Endothelial cell of umbilical vein (primary cell): ENCODE measurements at regions of chr3 and their contacts with region 1.

Region 1: DNA sequence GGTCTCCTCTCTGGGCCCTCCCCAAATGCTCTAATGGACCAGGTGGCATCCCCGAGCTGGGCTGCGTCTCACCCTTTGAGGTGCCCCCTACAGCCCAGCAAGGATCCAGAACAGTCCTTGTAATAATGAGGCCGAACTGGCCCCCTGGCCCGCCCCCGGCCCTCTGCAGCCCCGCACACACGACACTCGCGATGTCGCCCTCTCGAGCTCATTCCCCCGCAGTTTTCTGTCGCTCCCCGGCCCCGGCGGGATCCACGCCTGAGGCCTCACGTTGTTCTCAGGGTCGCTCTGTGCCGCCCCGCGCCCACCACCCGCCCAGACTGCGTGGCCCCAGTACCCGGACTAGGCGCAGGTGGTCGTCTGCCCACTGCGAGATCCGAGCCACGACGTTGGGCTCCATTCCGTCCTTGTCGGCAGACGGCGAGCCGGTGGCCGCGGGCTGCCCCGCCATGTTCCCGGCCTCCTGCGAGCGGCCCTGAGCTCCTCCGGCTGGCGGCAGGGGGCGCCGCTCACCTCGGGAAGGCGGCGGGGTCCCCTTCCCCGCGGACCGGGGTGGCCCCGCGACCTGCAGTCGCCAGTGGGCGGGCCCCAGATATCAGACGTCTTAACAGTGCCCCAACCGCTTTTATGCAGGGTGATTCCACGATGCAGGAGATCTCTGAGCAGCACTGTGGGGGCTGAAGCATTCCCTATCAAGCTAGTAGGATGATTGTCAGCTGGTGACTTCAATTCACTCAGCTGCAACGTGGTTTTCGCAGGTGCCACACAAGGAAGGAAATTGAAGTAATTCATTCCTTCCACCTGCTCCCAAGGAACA is at the start of gene C3orf33:
- DNase-seq: peak; percentile 73
- H3K4me3 ChIP-seq: peak within 1 kb of the TSS; percentile 75 to 93 (median 84)
- H3K27ac ChIP-seq: peak within 1 kb of the TSS; percentile 55
- H3K4me1 ChIP-seq: peaks cover 6% of the 10 kb centered on the region
- H3K27me3 ChIP-seq: no peaks in the 10 kb centered on the region
- CTCF ChIP-seq: peak; percentile 88 to 89
- POLR2A ChIP-seq: peak; percentile 22
- total RNA-seq, gene C3orf33: 0.74 and 1.7 TPM in 2 replicates

Region 2: DNA sequence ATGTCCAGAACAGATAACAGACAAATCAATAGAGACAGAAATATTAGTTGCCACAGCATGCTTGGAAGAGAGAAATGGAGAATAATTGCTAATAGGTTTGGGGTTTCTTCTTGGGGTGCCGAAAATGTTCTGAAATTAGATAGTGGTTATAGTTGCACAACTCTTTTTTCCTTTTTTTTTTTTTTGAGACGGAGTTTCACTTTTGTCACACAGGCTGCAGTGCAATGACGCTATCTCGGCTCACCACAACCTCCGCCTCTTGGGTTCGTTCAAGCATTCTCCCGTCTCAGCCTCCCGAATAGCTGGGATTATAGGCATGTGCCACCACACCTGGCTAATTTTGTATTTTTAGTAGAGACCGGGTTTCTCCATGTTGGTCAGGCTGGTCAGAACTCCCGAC is 224.4 kb before region 1 on chr3:
- CTCF ChIA-PET with region 1: no interaction called
- POLR2A ChIA-PET with region 1: no interaction called
- dilution Hi-C with region 1: no loop called
- intact Hi-C with region 1: no loop called
- DNase-seq: no peak
- H3K4me3 ChIP-seq: no peak overlapping the region
- H3K27ac ChIP-seq: no peak overlapping the region
- H3K4me1 ChIP-seq: no peaks in the 10 kb centered on the region
- H3K27me3 ChIP-seq: no peaks in the 10 kb centered on the region
- CTCF ChIP-seq: no peak
- POLR2A ChIP-seq: no peak

Region 3: DNA sequence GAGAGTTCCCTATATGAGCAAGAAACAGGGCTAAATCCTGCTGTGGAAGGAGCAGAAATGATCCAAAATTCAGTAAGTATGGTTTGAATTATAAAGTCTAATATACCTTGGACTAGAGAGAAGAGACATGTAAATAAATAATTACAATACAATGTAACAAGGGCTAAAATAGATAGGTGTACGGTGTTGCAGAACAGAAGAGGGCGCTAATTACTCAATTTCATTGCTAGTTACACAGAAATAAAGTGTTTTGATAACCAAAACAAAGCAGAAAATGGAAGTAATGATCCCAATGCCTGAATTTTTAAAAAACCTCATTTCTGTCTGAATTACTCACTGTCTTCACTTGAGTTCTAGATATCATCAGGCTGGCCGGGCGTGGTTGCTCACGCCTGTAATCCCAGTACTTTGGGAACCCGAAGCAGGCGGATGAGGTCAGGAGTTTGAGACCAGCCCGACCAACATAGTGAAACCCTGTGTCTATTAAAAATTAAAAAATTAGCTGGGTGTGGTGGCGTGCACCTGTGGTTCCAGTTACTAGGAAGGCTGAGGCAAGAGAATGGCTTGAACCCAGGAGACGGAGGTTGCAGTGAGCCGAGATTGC is 52.9 kb before region 1 on chr3:
- CTCF ChIA-PET with region 1: interaction called, 17 read pairs
- POLR2A ChIA-PET with region 1: no interaction called
- dilution Hi-C with region 1: no loop called
- intact Hi-C with region 1: loop called (anchors 2 kb)
- DNase-seq: peak; percentile 50
- H3K4me3 ChIP-seq: no peak overlapping the region
- H3K27ac ChIP-seq: no peak overlapping the region
- H3K4me1 ChIP-seq: no peaks in the 10 kb centered on the region
- H3K27me3 ChIP-seq: peaks cover 0 to 2% of the 10 kb centered on the region in 2 experiments
- CTCF ChIP-seq: peak; percentile 46 to 49
- POLR2A ChIP-seq: no peak

Region 4: DNA sequence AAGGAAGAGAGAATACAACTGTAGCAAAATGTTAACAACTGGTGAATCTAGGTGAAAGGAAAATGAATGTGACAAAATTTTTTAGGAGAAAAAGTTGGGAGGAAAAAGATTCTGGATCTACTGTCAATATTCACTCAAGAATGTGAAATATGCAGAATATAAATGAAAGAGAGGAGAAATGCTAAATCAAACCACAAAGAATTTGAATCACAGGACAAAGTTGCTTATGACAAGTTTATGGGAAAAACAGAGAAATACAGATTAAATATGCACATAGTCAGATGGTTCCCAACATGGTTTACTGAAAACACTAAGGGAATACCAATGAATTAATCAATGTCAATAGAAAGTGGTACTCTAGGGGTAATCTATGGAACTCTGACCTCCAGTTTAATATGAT is 27.5 kb before region 1 on chr3:
- CTCF ChIA-PET with region 1: interaction called, 19 read pairs
- POLR2A ChIA-PET with region 1: no interaction called
- dilution Hi-C with region 1: no loop called
- intact Hi-C with region 1: no loop called
- DNase-seq: no peak
- H3K4me3 ChIP-seq: no peak overlapping the region
- H3K27ac ChIP-seq: no peak overlapping the region
- H3K4me1 ChIP-seq: no peaks in the 10 kb centered on the region
- H3K27me3 ChIP-seq: no peaks in the 10 kb centered on the region
- CTCF ChIP-seq: no peak
- POLR2A ChIP-seq: no peak

Region 5: GRCh38 chr3:155791190-155791589 is 14.8 kb before region 1 on chr3:
- CTCF ChIA-PET with region 1: interaction called, 18 read pairs
- POLR2A ChIA-PET with region 1: no interaction called
- dilution Hi-C with region 1: no loop called
- intact Hi-C with region 1: no loop called
- DNase-seq: no peak
- H3K4me3 ChIP-seq: no peak overlapping the region
- H3K27ac ChIP-seq: no peak overlapping the region
- H3K4me1 ChIP-seq: no peaks in the 10 kb centered on the region
- H3K27me3 ChIP-seq: no peaks in the 10 kb centered on the region
- CTCF ChIP-seq: no peak
- POLR2A ChIP-seq: no peak

Region 6: GRCh38 chr3:155854141-155854940 is 48.3 kb after region 1 on chr3 and contains the start of gene SLC33A1:
- CTCF ChIA-PET with region 1: interaction called, 34 read pairs
- POLR2A ChIA-PET with region 1: interaction called, 4 read pairs
- dilution Hi-C with region 1: no loop called
- intact Hi-C with region 1: loop called (anchors 1 kb)
- DNase-seq: peak; percentile 100
- H3K4me3 ChIP-seq: peak within 1 kb of the TSS; percentile 56 to 96 (median 75)
- H3K27ac ChIP-seq: peak within 1 kb of the TSS; percentile 56
- H3K4me1 ChIP-seq: peaks cover 7% of the 10 kb centered on the region
- H3K27me3 ChIP-seq: no peaks in the 10 kb centered on the region
- CTCF ChIP-seq: no peak
- POLR2A ChIP-seq: peak; percentile 79
- total RNA-seq, gene SLC33A1: 30.1 and 30.3 TPM in 2 replicates

Region 7: GRCh38 chr3:155870133-155870944 is 64.3 kb after region 1 on chr3 and contains the start of gene GMPS:
- CTCF ChIA-PET with region 1: interaction called, 40 read pairs
- POLR2A ChIA-PET with region 1: interaction called, 4 read pairs
- dilution Hi-C with region 1: no loop called
- intact Hi-C with region 1: loop called (anchors 1 kb)
- DNase-seq: peak; percentile 96
- H3K4me3 ChIP-seq: peak within 1 kb of the TSS; percentile 93 to 98 (median 96)
- H3K27ac ChIP-seq: peak within 1 kb of the TSS; percentile 79
- H3K4me1 ChIP-seq: peaks cover 20% of the 10 kb centered on the region
- H3K27me3 ChIP-seq: no peaks in the 10 kb centered on the region
- CTCF ChIP-seq: peak; percentile 8 to 33
- POLR2A ChIP-seq: peak; percentile 59
- total RNA-seq, gene GMPS: 66.0 and 67.5 TPM in 2 replicates

Region 8: DNA sequence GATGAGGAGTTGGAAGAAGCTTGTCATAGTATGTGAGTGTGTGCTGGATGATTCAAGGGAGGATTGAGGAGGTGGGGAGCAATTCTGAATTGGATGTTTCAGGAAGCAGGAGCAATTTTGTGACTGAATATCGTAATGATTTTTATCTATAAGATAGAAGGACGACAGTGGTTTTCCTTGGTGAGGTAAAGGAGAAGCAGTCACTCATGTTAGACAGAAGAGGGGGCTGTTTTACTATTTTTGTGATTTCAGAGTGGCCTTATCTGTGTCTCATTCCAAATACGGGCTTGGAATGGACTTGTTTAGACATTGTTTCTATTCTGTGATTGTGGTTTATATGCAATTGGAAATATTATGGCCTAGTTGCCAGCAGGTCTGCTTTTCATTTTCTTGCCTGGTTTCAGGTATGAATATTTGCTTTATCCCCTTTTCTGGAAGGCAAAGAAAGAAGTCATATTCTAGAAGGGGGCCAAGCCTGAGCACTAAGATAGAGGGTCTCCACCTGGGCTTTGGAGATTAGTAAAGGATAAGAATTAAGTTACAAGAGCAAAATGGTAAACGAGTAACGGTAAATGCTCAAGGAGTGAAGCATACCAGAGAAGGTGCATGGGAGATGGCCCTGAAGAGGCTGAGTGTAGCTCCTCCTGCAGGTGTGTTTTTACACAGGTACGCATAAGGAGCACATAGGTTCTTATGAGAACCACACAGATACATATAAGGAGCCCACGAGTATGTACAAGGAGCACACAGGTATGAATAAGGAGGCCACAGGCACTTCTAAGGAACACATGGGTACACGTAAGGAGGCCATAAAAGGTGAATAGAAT is 189.7 kb after region 1 on chr3:
- CTCF ChIA-PET with region 1: interaction called, 10 read pairs
- POLR2A ChIA-PET with region 1: no interaction called
- dilution Hi-C with region 1: no loop called
- intact Hi-C with region 1: no loop called
- DNase-seq: peak; percentile 43
- H3K4me3 ChIP-seq: no peak overlapping the region
- H3K27ac ChIP-seq: no peak overlapping the region
- H3K4me1 ChIP-seq: no peaks in the 10 kb centered on the region
- H3K27me3 ChIP-seq: peaks cover 0 to 2% of the 10 kb centered on the region in 2 experiments
- CTCF ChIP-seq: peak; percentile 34 to 38
- POLR2A ChIP-seq: no peak